ENCODE measurements at regions of chr2 and their contacts with region 1.

Region 1: GRCh38 chr2:53751728-53752127 is 15.9 kb upstream of the CHAC2 start:
- DNase-seq: no peak
- H3K4me3 Mint-ChIP-seq: no peak overlapping the region
- H3K27ac Mint-ChIP-seq: peak overlapping the region; percentile 54
- H3K4me1 Mint-ChIP-seq: peaks cover 17% of the 10 kb centered on the region
- H3K27me3 Mint-ChIP-seq: no peaks in the 10 kb centered on the region

Region 2: DNA sequence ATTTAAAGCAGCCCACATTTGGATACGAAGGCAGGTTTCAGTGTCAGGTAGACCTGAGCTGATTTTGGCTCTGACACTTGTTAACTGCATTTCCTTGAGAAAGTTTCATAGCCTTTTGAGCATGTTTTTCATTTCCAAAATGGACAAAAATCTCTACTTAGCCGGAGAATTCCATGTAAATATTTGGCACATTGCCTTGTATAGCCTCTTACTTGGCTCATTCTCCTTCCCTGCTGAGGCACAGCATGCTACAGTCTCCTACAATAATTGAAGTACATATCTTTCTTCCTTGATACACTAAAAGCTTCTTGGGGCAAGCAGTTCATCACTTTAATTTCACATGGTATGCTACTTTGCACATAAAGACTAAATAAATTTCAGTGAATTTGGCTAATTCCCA is 756.3 kb before region 1 on chr2:
- intact Hi-C with region 1: no loop called
- DNase-seq: no peak
- H3K4me3 Mint-ChIP-seq: no peak overlapping the region
- H3K27ac Mint-ChIP-seq: no peak overlapping the region
- H3K4me1 Mint-ChIP-seq: no peaks in the 10 kb centered on the region
- H3K27me3 Mint-ChIP-seq: no peaks in the 10 kb centered on the region

Region 3: DNA sequence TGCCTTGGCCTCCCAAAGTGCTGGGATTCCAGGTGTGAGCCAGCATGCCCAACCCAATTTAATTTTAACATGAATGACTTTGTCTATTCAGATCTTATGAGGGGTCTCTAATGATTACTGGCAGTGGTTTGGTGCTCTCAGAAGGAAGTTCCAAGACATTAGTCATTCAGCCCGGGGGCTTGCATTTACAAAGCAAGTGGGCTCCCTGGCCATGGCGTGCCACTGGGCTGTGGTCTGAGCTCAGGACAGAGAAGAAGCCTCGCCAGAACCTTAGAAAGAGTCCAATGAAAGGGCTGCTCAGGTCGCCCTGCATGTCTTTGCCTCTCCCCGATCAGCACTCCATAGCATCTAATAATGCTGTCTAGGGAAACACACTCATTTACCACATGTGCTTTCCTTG is 166.7 kb before region 1 on chr2:
- intact Hi-C with region 1: no loop called
- DNase-seq: no peak
- H3K4me3 Mint-ChIP-seq: no peak overlapping the region
- H3K27ac Mint-ChIP-seq: no peak overlapping the region
- H3K4me1 Mint-ChIP-seq: no peaks in the 10 kb centered on the region
- H3K27me3 Mint-ChIP-seq: no peaks in the 10 kb centered on the region

Region 4: GRCh38 chr2:53672881-53673522 is 78.7 kb before region 1 on chr2:
- intact Hi-C with region 1: no loop called
- DNase-seq: no peak
- H3K4me3 Mint-ChIP-seq: no peak overlapping the region
- H3K27ac Mint-ChIP-seq: no peak overlapping the region
- H3K4me1 Mint-ChIP-seq: no peaks in the 10 kb centered on the region
- H3K27me3 Mint-ChIP-seq: no peaks in the 10 kb centered on the region

Region 5: GRCh38 chr2:53724536-53724935 is 27.2 kb before region 1 on chr2:
- intact Hi-C with region 1: loop called (anchors 1 kb)
- DNase-seq: no peak
- H3K4me3 Mint-ChIP-seq: no peak overlapping the region
- H3K27ac Mint-ChIP-seq: no peak overlapping the region
- H3K4me1 Mint-ChIP-seq: peaks cover 12% of the 10 kb centered on the region
- H3K27me3 Mint-ChIP-seq: no peaks in the 10 kb centered on the region

Region 6: GRCh38 chr2:53767405-53768241 is 15.9 kb after region 1 on chr2 and contains the start of gene CHAC2:
- intact Hi-C with region 1: loop called (anchors 1 kb)
- DNase-seq: peak; percentile 96
- H3K4me3 Mint-ChIP-seq: peak within 1 kb of the TSS; percentile 92
- H3K27ac Mint-ChIP-seq: peak within 1 kb of the TSS; percentile 98
- H3K4me1 Mint-ChIP-seq: peaks cover 24% of the 10 kb centered on the region
- H3K27me3 Mint-ChIP-seq: no peaks in the 10 kb centered on the region
- total RNA-seq, gene CHAC2: 24.8 and 27.4 TPM in 2 replicates

Region 7: GRCh38 chr2:53786705-53787612 is 35.2 kb after region 1 on chr2 and contains the starts of genes ASB3 and ERLEC1:
- intact Hi-C with region 1: loop called (anchors 5 kb)
- DNase-seq: peak; percentile 97
- H3K4me3 Mint-ChIP-seq: peak within 1 kb of the TSS; percentile 97
- H3K27ac Mint-ChIP-seq: peak within 1 kb of the TSS; percentile 96
- H3K4me1 Mint-ChIP-seq: peaks cover 30% of the 10 kb centered on the region
- H3K27me3 Mint-ChIP-seq: no peaks in the 10 kb centered on the region
- total RNA-seq, gene ASB3: 19.6 and 24.0 TPM in 2 replicates
- total RNA-seq, gene ERLEC1: 24.1 and 24.9 TPM in 2 replicates

Region 8: GRCh38 chr2:54589340-54590215 is 837.9 kb after region 1 on chr2:
- intact Hi-C with region 1: no loop called
- DNase-seq: peak; percentile 83
- H3K4me3 Mint-ChIP-seq: peak overlapping the region; percentile 67
- H3K27ac Mint-ChIP-seq: peak overlapping the region; percentile 85
- H3K4me1 Mint-ChIP-seq: peaks cover 66% of the 10 kb centered on the region
- H3K27me3 Mint-ChIP-seq: no peaks in the 10 kb centered on the region